Ovary (tissue), 10 donors: ENCODE measurements at regions of chr19 and their contacts with region 1.

Region 1: GRCh38 chr19:10194500-10195289 is at the start of gene DNMT1:
- DNase-seq: peak; percentile 94 to 97 (median 97)
- H3K4me3 ChIP-seq: peak within 1 kb of the TSS; percentile 68
- H3K27ac ChIP-seq: peak within 1 kb of the TSS; percentile 48 to 69
- H3K4me1 ChIP-seq: peaks cover 4% of the 10 kb centered on the region
- H3K27me3 ChIP-seq: no peaks in the 10 kb centered on the region
- CTCF ChIP-seq: no peak
- EP300 ChIP-seq: no peak
- POLR2A ChIP-seq: peak; percentile 69
- total RNA-seq, gene DNMT1: 28.1 to 74.2 (median 41.8) TPM

Region 2: DNA sequence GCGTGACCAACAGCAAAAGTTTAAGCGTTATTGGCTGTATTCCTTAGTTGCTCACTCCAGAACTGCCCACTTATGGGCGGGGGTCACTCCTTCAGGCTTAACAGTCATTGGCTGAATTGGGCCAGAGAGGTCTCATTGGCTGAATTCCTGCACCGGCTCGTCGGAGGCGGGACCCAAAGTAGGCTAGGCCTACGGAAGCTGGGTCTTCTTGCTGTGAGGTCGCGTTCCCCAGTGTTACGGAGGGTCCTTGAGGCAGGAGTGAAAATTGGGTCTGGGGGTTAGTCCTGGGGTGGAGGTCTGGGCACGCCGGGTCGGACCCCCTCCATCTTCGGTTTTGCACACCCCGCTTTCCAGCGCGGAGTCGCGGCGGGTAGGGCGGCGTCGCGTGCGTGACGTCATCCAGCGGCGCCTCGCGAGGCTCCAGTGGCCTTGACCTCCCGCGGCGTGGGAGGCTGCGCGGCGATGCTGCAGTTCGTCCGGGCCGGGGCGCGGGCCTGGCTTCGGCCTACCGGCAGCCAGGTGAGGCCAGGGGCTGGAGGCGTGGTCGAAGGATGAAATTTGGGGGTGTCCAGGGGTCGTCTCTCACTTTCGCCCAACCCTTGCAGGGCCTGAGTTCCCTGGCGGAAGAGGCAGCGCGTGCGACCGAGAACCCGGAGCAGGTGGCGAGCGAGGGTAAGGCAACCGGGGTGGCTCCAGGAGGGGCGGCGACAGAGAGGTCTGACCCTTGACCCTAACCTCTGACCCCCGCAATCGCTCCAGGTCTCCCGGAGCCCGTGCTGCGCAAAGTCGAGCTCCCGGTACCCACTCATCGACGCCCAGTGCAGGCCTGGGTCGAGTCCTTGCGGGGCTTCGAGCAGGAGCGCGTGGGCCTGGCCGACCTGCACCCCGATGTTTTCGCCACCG is 57.3 kb after region 1 on chr19 and contains the start of gene MRPL4:
- intact Hi-C with region 1: loop called in 1 of 4 experiments (anchors 10 kb)
- DNase-seq: peak; percentile 95 to 97 (median 96)
- H3K4me3 ChIP-seq: peak within 1 kb of the TSS; percentile 72
- H3K27ac ChIP-seq: peak within 1 kb of the TSS; percentile 54 to 76
- H3K4me1 ChIP-seq: peaks cover 6% of the 10 kb centered on the region
- H3K27me3 ChIP-seq: no peaks in the 10 kb centered on the region
- CTCF ChIP-seq: peak in 2 of 3 donors; percentile 14 to 54
- EP300 ChIP-seq: no peak
- POLR2A ChIP-seq: no peak
- total RNA-seq, gene MRPL4: 42.2 to 73.3 (median 58.9) TPM